Left cardiac atrium (tissue), 4 donors: ENCODE measurements at regions of chr6 and their contacts with region 1.

Region 1: DNA sequence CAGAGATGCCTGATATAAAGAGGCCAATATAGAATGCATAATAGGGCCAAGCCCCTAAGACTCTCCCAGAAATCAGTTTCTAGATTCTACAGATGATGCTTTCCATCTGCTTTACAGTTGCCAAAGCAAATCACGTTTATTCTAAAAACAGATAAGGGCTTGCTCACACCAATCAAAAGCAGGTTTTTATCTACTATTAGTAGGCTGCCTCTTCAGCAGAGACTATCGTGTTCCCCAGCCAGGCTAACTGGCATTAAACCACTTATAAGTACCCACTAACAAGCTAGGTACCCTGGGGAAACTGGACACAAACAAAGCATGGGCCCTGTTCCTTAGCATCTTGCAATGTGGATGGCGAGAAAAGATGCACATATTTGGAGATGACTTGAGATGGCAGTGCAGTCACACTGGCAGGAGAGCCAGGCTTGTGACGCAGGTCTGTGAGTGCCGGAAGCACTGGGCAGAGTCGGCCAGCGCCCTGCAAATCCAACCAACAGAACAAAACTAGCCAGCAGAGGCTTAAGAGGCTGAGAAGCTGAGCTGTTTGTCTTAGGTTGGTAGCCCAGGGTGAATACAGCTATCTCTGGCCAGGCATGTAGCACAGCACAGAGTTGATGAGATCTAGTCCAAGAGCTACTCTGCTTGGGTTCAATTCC is 73.4 kb downstream of the GFOD1 start:
- DNase-seq: peak; percentile 59
- ATAC-seq: peak; percentile 49 to 60

Region 2: GRCh38 chr6:13470238-13471140 is 56.5 kb after region 1 on chr6:
- intact Hi-C with region 1: loop called in 1 of 2 experiments (anchors 10 kb)
- DNase-seq: no peak
- ATAC-seq: peak; percentile 55 to 72

Region 3: GRCh38 chr6:13480631-13481501 is 66.8 kb after region 1 on chr6:
- intact Hi-C with region 1: loop called (anchors 2 to 10 kb)
- DNase-seq: no peak
- ATAC-seq: peak in 1 of 2 donors; percentile 50